ENCODE measurements at regions of chr16 and their contacts with region 1.

Region 1: GRCh38 chr16:29790183-29790952 is at the start of gene KIF22:
- DNase-seq: peak; percentile 100
- ATAC-seq: peak; percentile 97
- H3K4me3 Mint-ChIP-seq: peak within 1 kb of the TSS; percentile 96
- H3K27ac Mint-ChIP-seq: peak within 1 kb of the TSS; percentile 96
- H3K4me1 Mint-ChIP-seq: peaks cover 45% of the 10 kb centered on the region
- H3K27me3 Mint-ChIP-seq: no peaks in the 10 kb centered on the region
- total RNA-seq, gene KIF22: 205 to 266 TPM

Region 2: GRCh38 chr16:29729116-29729521 is 61.2 kb before region 1 on chr16:
- CTCF ChIA-PET with region 1: interaction called, 11 read pairs
- DNase-seq: no peak
- ATAC-seq: no peak
- H3K4me3 Mint-ChIP-seq: no peak overlapping the region
- H3K27ac Mint-ChIP-seq: no peak overlapping the region
- H3K4me1 Mint-ChIP-seq: peaks cover 34% of the 10 kb centered on the region
- H3K27me3 Mint-ChIP-seq: peaks cover 13% of the 10 kb centered on the region

Region 3: DNA sequence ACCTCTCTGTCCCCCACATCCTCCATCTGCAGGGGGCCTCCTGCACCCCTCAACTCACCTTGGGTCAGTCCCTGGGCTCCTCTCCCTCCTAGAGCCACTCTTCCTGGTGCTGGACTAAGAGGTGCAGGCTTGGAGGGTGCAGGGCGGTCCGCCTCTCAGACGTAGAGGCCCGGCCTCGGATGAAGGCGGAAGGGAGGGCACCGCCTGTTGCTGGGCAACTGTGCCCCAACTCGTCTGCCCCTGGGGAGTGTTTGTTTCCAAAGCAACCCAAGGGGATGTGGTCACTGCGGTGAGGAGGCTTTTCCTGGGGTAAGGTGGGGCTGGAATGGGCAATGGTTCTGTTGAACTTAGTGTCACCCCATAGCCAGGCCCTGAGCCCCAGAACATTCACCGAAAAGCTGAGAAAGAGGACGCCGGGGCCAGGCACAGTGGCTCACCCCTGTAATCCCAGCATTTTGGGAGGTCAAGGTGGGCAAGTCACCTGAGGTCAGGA is 44.5 kb before region 1 on chr16 and contains the start of gene C16orf54:
- CTCF ChIA-PET with region 1: interaction called, 11 read pairs
- DNase-seq: peak; percentile 98
- ATAC-seq: peak; percentile 89
- H3K4me3 Mint-ChIP-seq: peak within 1 kb of the TSS; percentile 99
- H3K27ac Mint-ChIP-seq: peak within 1 kb of the TSS; percentile 98
- H3K4me1 Mint-ChIP-seq: peaks cover 55% of the 10 kb centered on the region
- H3K27me3 Mint-ChIP-seq: peaks cover 3% of the 10 kb centered on the region
- total RNA-seq, gene C16orf54: 39.7 to 51.2 TPM

Region 4: GRCh38 chr16:29805378-29806098 is 15.2 kb after region 1 on chr16:
- CTCF ChIA-PET with region 1: interaction called, 35 read pairs
- DNase-seq: peak; percentile 99
- ATAC-seq: peak; percentile 70
- H3K4me3 Mint-ChIP-seq: peak overlapping the region; percentile 94
- H3K27ac Mint-ChIP-seq: peak overlapping the region; percentile 96
- H3K4me1 Mint-ChIP-seq: peaks cover 44% of the 10 kb centered on the region
- H3K27me3 Mint-ChIP-seq: no peaks in the 10 kb centered on the region

Region 5: DNA sequence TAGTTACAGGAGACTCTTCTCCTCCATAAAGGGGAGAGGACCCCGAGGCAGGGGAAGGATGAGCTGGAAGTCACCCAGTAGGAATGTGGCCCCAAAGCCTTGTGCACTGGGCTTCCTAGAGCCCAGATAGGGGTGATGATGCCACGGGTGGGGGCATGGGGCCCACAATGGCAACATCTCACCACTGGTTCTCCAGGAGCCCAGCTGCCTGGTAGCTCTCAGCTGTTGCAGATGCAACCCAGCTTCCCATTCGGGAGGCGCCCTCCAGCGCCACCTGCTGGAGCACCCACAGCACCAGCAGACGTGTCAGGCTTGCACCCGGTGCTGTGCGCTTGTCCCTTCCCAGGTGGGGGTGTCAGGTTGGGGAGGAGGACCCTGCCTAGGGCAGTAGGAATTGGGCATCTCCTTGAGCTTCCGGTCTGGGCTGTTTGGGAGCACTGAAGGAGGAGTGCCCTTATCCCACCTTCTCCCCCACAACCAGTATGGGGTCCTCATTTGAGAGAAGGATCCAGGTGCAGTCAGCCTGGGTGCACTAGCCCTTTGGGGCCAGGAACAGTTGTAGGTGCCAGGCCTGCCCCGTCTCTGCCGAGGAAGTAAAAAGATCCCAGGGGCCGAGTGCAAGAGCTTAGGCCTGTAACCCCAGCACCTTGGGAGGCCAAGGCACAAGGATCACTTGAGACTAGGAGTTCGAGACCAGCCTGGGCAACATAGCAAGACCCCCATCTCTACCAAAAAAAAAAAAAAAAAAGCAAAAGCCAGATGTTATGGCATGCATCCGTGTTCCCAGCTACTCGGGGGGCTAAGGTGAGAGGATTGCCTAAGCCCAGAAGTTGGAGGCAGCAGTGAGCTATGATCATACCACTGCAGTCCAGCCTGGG is 58.3 kb after region 1 on chr16:
- CTCF ChIA-PET with region 1: interaction called, 19 read pairs
- DNase-seq: peak; percentile 87
- ATAC-seq: peak; percentile 93
- H3K4me3 Mint-ChIP-seq: no peak overlapping the region
- H3K27ac Mint-ChIP-seq: no peak overlapping the region
- H3K4me1 Mint-ChIP-seq: no peaks in the 10 kb centered on the region
- H3K27me3 Mint-ChIP-seq: no peaks in the 10 kb centered on the region

Region 6: DNA sequence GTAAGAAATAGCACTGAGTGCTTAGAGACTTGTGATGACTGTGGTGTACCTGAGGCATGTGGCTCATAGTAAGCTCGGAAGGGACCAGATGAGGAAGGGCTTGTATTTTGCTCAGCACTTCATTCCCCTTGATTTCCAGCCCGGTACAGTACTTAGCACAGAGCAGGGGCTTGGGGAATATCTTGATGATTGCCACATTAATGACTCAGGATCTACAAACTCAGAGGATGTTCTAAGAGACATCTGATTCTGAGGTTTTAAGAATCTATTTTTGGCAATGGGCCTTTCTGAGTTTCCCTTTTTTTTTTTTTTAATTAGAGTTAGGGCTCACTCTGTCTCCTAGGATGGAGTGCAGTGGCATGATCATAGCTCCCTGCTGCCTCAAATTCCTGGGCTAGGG is 119.0 kb after region 1 on chr16:
- CTCF ChIA-PET with region 1: no interaction called
- DNase-seq: no peak
- ATAC-seq: no peak
- H3K4me3 Mint-ChIP-seq: no peak overlapping the region
- H3K27ac Mint-ChIP-seq: no peak overlapping the region
- H3K4me1 Mint-ChIP-seq: no peaks in the 10 kb centered on the region
- H3K27me3 Mint-ChIP-seq: no peaks in the 10 kb centered on the region